GM18951 (cell line): ENCODE measurements at regions of chr6 and their contacts with region 1.

Region 1: DNA sequence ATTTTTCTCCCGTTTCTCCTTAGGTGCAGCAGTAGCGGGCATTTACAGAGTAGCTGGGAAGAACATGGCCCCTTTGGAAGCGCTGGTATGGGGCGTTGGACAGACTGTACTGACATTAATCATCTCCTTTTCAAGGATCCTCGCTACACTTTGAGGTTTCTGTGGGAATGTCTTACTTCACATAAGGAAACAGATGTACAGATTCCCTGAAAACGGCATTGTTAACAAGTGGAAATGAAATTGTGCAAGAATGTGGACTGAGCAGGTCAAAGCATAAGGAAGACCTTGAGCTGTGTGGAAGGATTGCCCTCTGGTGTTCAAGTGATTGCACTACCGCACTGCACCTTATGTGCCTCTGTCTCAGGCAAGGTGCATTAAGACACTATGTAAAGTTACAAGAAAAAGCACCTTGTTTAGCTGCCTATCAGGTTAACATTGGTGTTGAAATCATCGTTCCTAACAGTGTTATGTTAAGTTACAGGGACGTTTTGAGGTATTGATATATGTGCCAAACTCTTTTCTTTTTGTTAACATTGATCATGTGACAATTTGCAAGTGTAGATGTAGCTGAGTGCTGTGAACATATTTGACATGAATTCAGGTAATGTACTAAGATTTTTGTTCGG is 38.0 kb downstream of the TMEM170B start:
- POLR2A ChIP-seq: no peak

Region 2: GRCh38 chr6:11144393-11144851 is 431.1 kb before region 1 on chr6:
- in situ Hi-C with region 1: loop called (anchors 10 kb)
- POLR2A ChIP-seq: no peak

Region 3: GRCh38 chr6:11179419-11180202 is 395.9 kb before region 1 on chr6:
- in situ Hi-C with region 1: no loop called
- POLR2A ChIP-seq: no peak

Region 4: DNA sequence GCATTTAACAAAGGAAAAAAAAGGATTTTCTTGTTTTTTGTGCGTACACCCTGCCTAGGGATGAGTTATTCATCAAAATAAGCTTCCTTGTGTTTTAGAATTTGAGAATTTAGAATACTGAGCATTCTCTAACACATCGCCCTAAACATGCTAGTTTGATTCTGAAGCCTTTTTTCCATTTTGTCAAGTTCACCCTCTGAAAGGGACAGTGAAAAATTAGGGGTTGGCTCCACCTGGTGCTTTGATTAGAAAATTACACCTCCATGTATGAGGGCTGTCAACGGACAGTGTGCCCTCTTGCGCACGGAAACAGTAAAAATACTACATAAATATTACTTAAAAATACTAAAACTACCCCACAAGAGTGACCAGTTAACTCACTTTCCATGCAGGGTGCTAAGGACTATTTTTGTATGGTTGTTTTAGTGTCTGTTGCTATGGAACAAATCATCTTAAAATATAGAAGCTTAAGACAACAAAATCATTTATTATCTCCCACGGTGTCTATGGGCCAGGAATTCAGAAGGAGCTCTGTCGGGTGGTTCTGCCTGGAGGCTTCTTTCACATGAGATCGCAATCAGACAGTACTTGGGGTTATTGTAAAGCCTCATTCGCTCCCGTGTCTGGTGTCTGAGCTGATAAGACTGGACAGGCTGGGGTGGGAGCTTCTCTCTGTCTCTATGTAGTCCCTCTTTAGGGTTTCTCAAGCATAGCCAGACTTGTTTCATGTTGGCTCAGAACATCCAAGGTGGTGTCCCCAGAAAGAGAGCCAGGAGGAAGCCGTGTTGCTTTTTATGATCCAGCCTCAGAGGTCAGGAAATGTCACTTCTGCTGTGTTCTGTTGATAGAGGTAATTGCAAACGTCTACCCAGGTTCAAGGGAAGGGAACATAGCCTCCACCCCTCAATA is 79.1 kb before region 1 on chr6:
- in situ Hi-C with region 1: loop called (anchors 10 kb)
- POLR2A ChIP-seq: no peak

Region 5: GRCh38 chr6:11824986-11825385 is 249.5 kb after region 1 on chr6:
- in situ Hi-C with region 1: no loop called
- POLR2A ChIP-seq: no peak